ENCODE measurements at regions of chr10 and their contacts with region 1.

Region 1: DNA sequence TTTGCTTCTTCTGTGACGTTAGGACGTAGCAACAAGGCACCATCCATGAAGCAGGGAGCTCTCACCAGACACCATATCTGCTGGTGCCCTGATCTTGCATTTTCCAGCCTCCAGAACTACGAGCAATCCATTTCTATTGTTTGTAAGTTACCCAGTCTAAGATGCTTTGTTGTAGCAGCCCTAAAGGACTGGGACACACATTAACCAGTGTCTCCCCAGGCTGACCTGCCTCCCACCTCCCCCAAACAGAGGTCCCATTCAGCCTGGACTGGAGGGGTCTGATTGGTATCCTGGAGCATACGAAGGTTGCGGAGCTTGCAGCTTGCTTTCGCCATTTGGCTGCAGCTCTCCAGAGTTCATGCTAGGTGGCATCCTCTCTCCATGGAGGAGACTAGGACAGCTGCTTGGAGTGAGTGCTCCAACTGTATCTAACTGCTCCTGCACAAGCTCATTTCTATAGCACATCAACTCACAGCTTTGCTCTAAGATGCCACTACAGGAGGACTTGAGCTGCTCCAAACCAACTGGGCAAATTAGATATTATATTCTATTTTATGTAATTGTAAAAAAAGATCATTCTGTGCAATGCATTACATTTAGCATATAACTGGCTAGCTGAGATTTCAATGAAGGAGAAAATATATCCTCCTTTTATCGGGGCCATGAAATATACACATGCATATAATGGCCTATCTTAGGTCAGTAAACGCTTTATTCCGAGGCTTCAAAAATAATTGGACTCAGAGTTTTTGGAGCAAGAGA is 8.0 kb upstream of the GRK5 start:
- DNase-seq: peak; percentile 59
- H3K4me3 ChIP-seq: no peak overlapping the region
- H3K27ac ChIP-seq: no peak overlapping the region
- H3K4me1 ChIP-seq: no peaks in the 10 kb centered on the region
- H3K27me3 ChIP-seq: no peaks in the 10 kb centered on the region
- CTCF ChIP-seq: peak; percentile 67

Region 2: GRCh38 chr10:118729641-118730258 is 469.7 kb before region 1 on chr10:
- intact Hi-C with region 1: no loop called
- DNase-seq: no peak
- H3K4me3 ChIP-seq: no peak overlapping the region
- H3K27ac ChIP-seq: peak overlapping the region; percentile 71
- H3K4me1 ChIP-seq: peaks cover 17% of the 10 kb centered on the region
- H3K27me3 ChIP-seq: no peaks in the 10 kb centered on the region
- CTCF ChIP-seq: no peak

Region 3: DNA sequence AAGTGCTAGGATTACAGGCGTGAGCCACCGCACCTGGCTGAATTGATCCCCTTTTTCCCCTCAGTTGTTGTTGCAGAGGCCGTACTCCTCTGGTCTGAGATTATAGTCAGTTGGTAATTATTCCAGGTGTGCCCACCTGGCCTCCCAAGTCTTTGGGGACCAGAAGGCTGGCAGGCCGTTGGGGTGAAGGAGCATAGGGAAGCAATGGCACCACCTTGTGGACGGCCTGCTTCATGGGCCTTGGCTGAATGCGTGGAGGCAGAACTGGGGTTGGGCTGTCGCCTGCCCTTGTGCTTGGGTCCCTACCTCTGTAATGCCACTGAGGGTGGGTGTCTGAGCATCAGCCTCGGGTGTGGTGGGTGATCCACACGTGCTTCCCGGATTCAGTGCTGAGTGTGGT is 217.4 kb after region 1 on chr10:
- intact Hi-C with region 1: loop called (anchors 2 kb)
- DNase-seq: peak; percentile 58
- H3K4me3 ChIP-seq: no peak overlapping the region
- H3K27ac ChIP-seq: no peak overlapping the region
- H3K4me1 ChIP-seq: no peaks in the 10 kb centered on the region
- H3K27me3 ChIP-seq: no peaks in the 10 kb centered on the region
- CTCF ChIP-seq: peak; percentile 81

Region 4: DNA sequence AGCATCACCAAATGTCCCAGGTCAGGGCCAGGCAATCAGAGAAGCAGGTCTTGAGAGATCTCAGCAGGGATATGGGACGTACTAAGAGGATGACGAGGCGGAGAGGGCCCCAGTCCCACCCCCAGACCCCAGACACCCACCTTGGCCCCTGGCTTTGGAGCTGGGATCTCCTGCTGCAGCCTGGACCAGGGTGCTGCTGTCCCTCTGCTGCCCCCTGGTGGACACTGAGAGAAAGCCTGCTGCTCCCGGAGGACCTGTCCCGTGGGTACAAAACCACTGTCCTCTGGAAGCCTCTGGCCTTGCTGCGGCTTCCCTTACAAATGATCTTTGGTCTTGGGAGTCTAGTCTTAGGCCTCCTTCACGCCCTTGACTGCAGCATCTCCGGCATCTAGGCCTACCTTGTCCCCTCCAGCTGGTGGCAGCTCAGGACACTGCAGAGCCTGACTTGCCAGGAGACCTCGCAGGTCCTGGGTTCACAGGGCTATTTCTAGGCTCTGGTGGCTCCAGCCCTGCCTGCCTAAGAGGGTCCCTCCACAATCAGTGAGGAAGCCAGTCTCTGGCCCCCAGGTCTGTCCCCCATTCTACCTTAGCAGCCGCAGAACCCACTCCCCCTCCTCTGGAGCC is 246.0 kb after region 1 on chr10:
- intact Hi-C with region 1: loop called (anchors 2 kb)
- DNase-seq: peak; percentile 88
- H3K4me3 ChIP-seq: no peak overlapping the region
- H3K27ac ChIP-seq: no peak overlapping the region
- H3K4me1 ChIP-seq: no peaks in the 10 kb centered on the region
- H3K27me3 ChIP-seq: no peaks in the 10 kb centered on the region
- CTCF ChIP-seq: peak; percentile 94